ENCODE measurements at regions of chr15 and their contacts with region 1.

Region 1: GRCh38 chr15:73697033-73697467 is 12.9 kb downstream of the CD276 start:
- DNase-seq: peak; percentile 78
- CTCF ChIP-seq: no peak

Region 2: GRCh38 chr15:73240866-73241499 is 456.1 kb before region 1 on chr15:
- CTCF ChIA-PET with region 1: interaction called, 21 read pairs
- POLR2A ChIA-PET with region 1: no interaction called
- DNase-seq: peak; percentile 45
- CTCF ChIP-seq: peak; percentile 84

Region 3: GRCh38 chr15:73560501-73561117 is 136.4 kb before region 1 on chr15:
- CTCF ChIA-PET with region 1: interaction called, 49 read pairs
- POLR2A ChIA-PET with region 1: no interaction called
- DNase-seq: no peak
- CTCF ChIP-seq: peak; percentile 29

Region 4: DNA sequence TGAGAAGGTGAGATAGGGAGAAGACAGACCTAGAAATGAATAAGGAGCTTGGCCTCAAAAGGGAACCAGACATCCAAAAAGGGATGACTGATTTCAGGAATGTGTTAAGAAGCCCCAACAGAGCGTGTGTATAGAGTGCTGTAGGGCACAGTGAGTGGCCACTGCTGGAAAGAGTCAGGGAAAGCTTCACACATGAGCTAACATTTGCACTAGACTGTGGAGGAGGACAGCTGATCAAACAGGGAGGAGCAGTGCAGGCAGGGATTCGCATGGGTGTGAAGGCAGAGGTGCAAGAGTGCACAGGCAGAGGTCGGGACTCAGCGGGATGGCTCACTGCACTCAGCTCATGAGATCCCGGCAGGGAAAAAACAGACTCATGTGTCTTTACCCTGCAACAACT is 125.7 kb before region 1 on chr15:
- CTCF ChIA-PET with region 1: interaction called, 13 read pairs
- POLR2A ChIA-PET with region 1: no interaction called
- DNase-seq: no peak
- CTCF ChIP-seq: no peak

Region 5: DNA sequence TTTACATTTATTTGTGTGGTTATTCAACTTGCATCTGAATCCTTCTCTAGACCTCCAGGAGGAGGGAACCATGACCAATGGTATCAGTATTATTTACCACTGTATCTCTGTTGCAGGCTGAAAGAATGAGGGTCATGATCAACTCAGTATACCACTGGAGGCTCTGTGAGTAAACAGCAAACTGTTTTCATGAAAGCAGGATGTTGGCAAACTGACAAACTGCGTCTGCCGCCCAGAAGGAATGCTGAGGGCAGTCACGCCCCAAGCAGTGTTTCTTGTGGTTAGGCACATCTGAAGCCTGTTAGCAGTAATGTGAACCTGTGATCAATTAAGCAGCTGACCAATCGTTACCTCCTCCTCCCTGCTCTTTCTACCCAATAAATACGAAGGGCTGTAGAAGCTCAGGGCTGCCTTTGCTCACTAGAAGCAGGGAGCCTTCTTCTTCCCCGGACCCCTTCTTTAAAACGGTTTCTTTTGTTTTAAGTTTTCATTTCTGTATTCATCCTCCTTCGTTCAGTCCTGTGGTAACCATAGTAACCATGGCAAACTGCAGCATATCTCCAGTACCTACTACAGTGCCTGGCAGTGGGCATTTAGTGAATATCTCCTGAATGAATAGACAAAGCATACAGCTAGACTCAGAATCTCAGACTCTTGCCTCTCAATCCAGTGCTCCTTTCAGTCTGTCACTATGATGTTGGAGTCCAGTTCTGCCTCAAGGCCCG is 57.4 kb before region 1 on chr15:
- CTCF ChIA-PET with region 1: interaction called, 105 read pairs
- POLR2A ChIA-PET with region 1: no interaction called
- DNase-seq: no peak
- CTCF ChIP-seq: no peak

Region 6: DNA sequence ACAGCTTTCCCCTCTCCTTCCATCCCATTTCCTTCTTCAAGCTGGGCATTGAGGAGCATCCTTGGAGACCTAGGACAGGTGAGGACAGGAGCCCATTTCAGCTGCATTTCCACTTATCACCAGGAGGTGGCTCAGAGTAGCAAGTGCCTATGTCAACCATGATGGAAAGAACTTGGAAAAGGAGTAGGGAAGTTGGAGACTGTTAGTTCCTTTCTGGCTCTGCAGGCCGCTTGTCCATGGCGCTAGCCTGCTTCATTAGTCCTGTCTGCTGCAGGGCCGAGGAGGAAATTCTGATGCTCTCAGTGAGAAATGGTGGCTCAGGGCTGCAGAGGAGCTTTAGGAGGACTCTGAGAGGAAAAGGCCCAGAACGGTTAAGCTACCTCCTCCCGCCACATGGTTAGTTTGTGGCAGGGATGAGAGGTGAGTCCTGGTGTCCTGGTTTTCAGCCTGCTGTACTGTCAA is 19.9 kb before region 1 on chr15:
- CTCF ChIA-PET with region 1: interaction called, 392 read pairs
- POLR2A ChIA-PET with region 1: no interaction called
- DNase-seq: peak; percentile 54
- CTCF ChIP-seq: peak; percentile 78

Region 7: DNA sequence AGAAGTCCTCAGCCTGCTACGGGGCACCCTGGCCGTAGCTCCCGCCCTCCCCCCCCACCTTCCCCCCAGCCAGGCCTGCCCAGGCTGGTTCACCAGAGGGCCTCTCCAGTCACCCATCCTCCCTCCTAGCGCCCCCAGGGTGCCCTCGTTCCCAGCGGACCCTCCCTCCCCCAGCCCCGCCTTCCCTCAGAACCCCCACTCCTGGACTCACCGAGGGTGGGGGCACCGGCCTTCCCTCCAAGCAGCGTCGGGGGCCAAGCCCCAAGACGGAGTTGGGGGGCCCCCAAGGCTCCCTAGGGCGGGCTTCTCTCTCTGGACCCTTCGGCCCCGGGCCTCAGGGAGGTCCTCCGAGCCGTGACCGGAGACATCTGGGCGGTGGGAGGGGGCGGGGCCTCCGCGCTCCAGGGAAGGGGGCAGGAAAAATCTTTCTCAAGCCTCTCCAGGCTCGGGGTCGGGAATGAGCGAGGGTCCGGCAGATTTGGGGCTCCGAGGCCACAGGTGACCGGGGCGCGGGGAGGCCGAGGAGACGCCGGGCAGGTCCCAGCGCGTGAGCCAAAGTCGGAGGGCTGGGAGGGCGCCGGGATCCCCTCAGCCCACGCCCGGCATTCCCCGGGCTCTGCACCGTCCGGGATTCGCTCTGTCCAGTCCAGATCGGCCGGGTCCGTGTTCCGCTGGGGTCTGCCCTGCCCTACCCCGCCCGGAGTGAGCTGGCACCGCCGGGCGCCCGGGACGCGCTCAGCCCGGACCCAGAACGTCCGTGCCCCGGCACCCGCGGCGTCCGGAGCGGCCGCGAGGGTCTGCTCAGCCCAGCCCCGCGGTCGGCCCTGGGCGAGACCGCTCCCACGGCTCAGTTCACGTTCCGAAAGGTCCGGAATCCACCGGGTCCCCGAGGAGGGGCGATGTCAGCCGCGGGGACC is 55.1 kb after region 1 on chr15:
- CTCF ChIA-PET with region 1: no interaction called
- POLR2A ChIA-PET with region 1: no interaction called
- DNase-seq: no peak
- CTCF ChIP-seq: no peak

Measured in GM10248 (cell line).